Esophagus muscularis mucosa (tissue), 4 donors: ENCODE measurements at regions of chr9 and their contacts with region 1.

Region 1: DNA sequence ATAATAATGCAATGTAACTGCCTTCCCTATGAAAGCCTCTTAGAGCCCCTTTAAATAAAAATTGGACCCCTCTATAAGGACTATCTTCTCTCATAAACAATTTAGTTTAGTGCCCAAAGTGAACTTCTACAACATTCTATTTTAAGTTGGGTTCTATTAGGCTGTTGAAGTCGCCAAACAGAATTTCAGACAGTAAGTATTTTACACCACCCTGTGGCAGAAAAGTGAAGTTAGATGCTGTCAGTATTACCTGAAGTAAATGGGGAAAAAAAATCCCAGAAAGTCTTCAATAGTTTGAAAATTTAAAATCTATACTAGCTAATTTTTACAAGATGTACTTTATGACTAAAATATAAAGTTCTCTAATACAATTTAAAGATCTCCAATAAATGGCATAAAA is 29.5 kb downstream of the CAAP1 start:
- DNase-seq: no peak
- H3K4me3 ChIP-seq: no peak overlapping the region
- H3K27ac ChIP-seq: no peak overlapping the region
- H3K4me1 ChIP-seq: peaks cover 0 to 15% (median 11%) of the 10 kb centered on the region in 4 donors
- H3K27me3 ChIP-seq: no peaks in the 10 kb centered on the region
- CTCF ChIP-seq: peak; percentile 28 to 48 (median 45)
- EP300 ChIP-seq: no peak
- POLR2A ChIP-seq: no peak

Region 2: DNA sequence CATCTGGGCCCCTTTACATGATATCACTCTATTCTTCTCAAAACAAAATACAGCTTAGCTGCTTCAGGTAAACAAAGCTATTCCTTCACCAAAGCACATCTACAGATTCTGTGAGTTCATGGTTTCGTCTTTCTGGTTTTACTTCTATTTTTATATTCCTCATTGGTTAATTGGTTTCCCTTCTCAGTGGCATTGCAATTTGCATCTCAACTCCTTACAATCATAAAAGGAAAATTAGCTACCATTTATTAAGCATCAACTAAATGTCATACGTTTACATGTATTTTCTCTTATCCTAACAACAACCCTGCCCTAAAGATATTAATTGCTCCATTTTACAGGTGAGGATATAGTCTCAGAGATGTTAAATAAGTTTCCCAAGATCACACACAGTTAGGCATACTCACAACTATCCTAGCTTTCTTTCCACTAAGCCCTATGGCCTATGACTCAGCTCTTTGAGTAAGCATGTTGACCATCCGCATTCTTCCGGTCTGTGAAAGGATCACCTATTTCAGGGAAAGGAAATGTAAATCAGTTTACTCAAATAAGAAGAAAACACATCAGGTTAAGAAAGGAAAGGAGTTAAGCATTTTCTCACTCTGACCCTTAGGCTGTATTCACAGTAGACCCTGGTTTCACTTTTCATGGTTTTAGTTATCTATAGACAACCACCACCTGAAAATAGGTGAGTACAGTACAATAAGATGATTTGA is 116.6 kb before region 1 on chr9:
- intact Hi-C with region 1: loop called (anchors 5 kb)
- DNase-seq: no peak
- H3K4me3 ChIP-seq: no peak overlapping the region
- H3K27ac ChIP-seq: no peak overlapping the region
- H3K4me1 ChIP-seq: no peaks in the 10 kb centered on the region
- H3K27me3 ChIP-seq: no peaks in the 10 kb centered on the region
- CTCF ChIP-seq: no peak
- EP300 ChIP-seq: no peak
- POLR2A ChIP-seq: no peak

Region 3: DNA sequence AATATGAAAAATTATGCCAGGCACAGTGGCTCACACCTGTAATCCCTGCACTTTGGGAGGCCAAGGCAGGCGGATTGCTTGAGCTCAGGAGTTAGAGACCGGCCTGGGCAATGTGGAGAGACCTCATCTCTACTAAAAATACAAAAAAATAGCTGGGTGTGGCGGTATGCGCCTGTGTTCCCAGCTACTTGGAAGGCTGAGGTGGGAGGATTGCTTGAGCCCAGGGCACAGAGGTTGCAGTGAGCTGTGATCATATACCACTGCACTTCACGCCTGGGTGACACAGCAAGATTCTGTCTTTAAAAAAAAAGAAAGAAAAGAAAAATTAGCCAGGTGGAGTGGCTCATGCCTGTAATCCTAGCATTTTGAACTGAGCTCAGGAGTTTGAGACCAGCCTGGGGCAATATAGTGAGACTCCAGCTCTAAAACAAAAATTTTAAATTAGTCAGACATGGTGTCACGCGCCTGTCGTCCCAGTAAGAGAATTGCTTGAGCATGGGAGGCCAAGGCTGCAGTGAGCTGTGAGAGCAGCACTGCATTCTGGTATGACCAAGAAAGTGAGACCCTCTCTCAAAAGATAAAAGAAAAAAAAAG is 65.9 kb after region 1 on chr9:
- intact Hi-C with region 1: no loop called
- DNase-seq: no peak
- H3K4me3 ChIP-seq: no peak overlapping the region
- H3K27ac ChIP-seq: no peak overlapping the region
- H3K4me1 ChIP-seq: peaks cover 0 to 12% (median 3%) of the 10 kb centered on the region in 4 donors
- H3K27me3 ChIP-seq: no peaks in the 10 kb centered on the region
- CTCF ChIP-seq: no peak
- EP300 ChIP-seq: no peak
- POLR2A ChIP-seq: no peak